Dorsolateral prefrontal cortex (tissue), 120 donors: ENCODE measurements at regions of chr17 and their contacts with region 1.

Region 1: GRCh38 chr17:40019140-40019991 is 4.1 kb downstream of the CSF3 start:
- DNase-seq: no peak
- H3K4me3 ChIP-seq: no peak overlapping the region
- H3K27ac ChIP-seq: no peak overlapping the region
- H3K27me3 ChIP-seq: no peaks in the 10 kb centered on the region
- CTCF ChIP-seq: no peak

Region 2: GRCh38 chr17:40086150-40087044 is 67.0 kb after region 1 on chr17:
- intact Hi-C with region 1: loop called in 1 of 2 experiments (anchors 10 kb)
- DNase-seq: no peak
- H3K4me3 ChIP-seq: peak overlapping the region in 3 of 59 donors; percentile 2 to 18 (median 10)
- H3K27ac ChIP-seq: peak overlapping the region in 52 of 59 donors; percentile 9 to 77 (median 56)
- H3K27me3 ChIP-seq: no peaks in the 10 kb centered on the region
- CTCF ChIP-seq: peak; percentile 51 to 94 (median 82)

Region 3: DNA sequence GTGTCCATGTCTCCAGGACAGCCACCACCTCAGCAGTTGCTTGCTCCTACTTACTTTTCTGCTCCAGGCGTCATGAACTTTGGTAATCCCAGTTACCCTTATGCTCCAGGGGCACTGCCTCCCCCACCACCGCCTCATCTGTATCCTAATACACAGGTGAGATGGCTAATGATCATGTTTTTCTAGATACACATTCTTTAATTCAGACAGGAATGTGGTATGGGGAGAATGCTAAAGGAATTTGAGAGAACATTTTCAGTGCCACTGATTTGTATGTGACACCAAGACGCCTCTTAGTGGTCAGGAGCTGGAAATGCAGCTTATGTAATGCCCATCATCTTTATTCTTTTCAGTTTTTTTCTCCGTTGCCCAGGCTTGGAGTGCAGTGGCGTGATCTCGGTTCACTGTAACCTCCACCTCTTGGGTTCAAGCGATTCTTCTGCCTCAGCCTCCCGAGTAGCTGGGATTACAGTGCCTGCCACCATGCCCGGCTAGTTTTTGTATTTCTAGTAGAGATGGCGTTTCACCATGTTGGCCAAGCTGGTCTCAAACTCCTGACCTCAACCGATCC is 149.0 kb after region 1 on chr17:
- intact Hi-C with region 1: loop called (anchors 5 kb)
- DNase-seq: peak in 2 of 10 donors; percentile 37 to 56
- H3K4me3 ChIP-seq: no peak overlapping the region
- H3K27ac ChIP-seq: peak overlapping the region; percentile 10 to 95 (median 79)
- H3K27me3 ChIP-seq: no peaks in the 10 kb centered on the region
- CTCF ChIP-seq: peak; percentile 75 to 95 (median 88)

Region 4: DNA sequence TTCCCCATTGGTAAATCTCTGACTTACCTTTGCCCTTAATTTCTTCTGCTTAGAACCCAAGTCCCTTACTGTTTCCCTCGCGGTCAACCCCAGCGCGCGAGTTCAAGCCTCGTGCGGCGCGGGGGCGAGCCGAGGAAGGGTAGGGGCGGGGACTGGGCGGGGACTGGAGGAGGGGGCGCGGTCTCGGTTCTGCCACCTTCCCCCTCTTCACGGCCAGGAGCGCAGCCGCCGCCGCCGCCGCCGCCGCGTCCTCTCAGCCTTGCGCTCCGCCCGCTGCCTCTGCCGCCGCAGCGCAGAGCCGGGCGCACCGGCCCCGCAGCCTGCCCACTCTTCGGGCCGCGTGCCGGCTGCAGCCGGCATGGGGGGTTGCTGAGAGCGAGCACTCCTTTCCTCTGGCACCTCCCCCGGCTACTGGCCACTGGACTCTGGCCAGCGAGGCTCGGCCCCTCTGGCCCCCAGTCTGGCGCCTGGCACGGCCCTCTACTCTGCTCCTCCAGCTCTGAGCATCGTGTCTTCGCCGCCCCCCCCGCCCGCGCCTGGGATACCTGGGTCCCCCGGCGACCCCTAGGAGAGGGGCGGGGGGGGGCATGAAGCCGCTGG is 158.0 kb after region 1 on chr17 and contains the start of gene RAPGEFL1:
- intact Hi-C with region 1: loop called in 1 of 2 experiments (anchors 5 kb)
- DNase-seq: peak in 7 of 10 donors; percentile 50 to 80 (median 72)
- H3K4me3 ChIP-seq: peak within 1 kb of the TSS; percentile 18 to 74 (median 60)
- H3K27ac ChIP-seq: peak within 1 kb of the TSS in 56 of 59 donors; percentile 30 to 94 (median 80)
- H3K27me3 ChIP-seq: no peaks in the 10 kb centered on the region
- CTCF ChIP-seq: peak in 1 of 56 donors; percentile 11
- total RNA-seq, gene RAPGEFL1: 31.7 to 151 (median 99.5) TPM

Region 5: DNA sequence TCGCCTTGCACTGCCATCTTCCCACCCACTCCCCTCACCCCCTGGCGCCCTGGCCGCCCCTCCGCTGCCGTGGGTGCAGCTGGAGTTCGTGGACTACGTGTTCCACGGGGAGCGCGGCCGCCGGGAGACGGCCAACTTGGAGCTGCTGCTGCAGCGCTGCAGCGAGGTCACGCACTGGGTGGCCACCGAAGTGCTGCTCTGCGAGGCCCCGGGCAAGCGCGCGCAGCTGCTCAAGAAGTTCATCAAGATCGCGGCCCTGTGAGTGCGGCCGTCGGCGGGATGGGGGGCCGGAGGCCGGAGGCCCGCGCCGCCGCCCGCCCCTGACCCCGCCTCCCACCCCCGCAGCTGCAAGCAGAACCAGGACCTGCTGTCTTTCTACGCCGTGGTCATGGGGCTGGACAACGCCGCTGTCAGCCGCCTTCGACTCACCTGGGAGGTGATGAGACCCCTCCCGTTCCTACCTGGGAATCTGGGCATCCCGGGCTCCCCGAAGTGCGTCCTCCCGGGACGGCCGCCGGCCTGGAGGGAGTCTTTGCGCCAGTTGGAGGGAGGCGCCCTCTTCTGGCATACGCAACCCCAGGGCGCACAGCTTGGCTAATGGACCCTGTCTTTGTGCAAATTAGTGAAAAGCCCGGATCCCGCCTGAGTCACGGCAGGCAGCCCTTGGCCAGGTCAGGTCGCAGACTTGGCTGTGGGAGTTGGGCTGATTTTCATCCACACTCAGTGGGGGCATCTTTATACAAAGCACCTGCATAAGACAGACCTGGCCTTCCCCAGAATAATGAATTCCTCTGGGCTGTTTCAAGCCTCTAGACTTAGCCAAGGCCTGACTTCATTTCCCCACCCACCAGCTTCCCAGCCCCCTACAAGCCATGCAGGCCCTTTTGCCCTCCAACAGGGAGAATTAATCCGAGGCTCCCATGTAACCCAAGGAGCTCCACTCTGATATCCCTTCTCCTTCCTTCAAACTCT is 172.2 kb after region 1 on chr17:
- intact Hi-C with region 1: loop called in 1 of 2 experiments (anchors 5 kb)
- DNase-seq: peak; percentile 63 to 80 (median 74)
- H3K4me3 ChIP-seq: peak overlapping the region; percentile 35 to 74 (median 60)
- H3K27ac ChIP-seq: peak overlapping the region in 50 of 59 donors; percentile 7 to 83 (median 64)
- H3K27me3 ChIP-seq: no peaks in the 10 kb centered on the region
- CTCF ChIP-seq: peak; percentile 14 to 81 (median 67)

Region 6: DNA sequence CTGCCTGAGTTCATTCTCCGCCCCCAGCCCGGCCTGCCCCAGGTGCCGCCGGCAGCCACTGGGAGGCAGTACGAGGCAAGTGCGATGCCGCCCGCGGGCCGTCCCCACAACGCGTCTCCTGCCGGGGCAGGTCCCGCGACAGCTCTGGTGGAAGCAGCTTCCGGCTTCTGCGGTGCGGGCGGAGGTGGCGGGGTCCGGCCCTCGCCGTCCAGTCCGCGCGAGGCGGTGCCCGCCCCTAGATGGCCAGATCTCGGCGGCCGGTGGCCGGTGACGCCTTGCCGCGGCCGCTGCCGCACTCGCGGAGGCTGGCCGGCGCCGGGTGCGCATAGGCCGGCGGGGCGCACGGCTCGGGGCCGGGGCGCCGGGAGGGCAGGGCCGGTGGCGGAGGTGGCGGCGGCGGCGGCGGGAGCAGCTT is 343.3 kb after region 1 on chr17:
- intact Hi-C with region 1: loop called in 1 of 2 experiments (anchors 10 kb)
- DNase-seq: peak in 2 of 10 donors; percentile 41 to 49
- H3K4me3 ChIP-seq: peak overlapping the region in 54 of 59 donors; percentile 26 to 67 (median 48)
- H3K27ac ChIP-seq: no peak overlapping the region
- H3K27me3 ChIP-seq: peaks cover 0 to 35% (median 6%) of the 10 kb centered on the region in 45 donors
- CTCF ChIP-seq: peak in 37 of 56 donors; percentile 13 to 55 (median 33)